Astrocyte of the cerebellum (primary cell): ENCODE measurements at regions of chr13 and their contacts with region 1.

Region 1: DNA sequence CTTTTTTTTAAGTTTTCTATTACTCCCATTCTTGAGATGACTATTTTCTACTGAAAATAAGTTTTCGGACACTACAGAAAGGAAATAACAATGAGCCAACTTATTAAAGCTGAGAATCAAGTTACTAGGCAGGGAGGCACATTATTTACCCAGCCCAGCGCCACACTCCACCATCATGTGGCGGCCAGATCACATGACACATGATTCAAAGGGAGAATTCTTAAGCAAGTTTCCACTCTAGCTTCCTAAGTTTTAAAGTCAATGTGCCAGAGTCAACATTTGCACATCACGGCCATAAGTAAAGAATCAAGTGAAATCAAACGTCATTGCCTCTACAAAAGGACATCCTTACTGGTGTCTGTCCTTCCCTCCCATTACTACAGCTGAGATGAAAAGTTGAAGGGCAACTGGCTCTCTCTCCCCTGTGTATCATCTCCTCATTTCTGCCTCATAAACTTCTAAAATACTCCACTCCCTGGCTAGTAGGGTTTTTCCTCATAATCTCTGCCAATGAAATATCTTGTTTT is 81.7 kb downstream of the KLF12 start:
- DNase-seq: no peak
- H3K4me3 ChIP-seq: no peak overlapping the region
- CTCF ChIP-seq: no peak

Region 2: GRCh38 chr13:74098077-74098476 is 45.6 kb after region 1 on chr13:
- in situ Hi-C with region 1: loop called (anchors 5 kb)
- DNase-seq: no peak
- H3K4me3 ChIP-seq: no peak overlapping the region
- CTCF ChIP-seq: no peak